Endothelial cell of umbilical vein (primary cell): ENCODE measurements at regions of chr1 and their contacts with region 1.

Region 1: DNA sequence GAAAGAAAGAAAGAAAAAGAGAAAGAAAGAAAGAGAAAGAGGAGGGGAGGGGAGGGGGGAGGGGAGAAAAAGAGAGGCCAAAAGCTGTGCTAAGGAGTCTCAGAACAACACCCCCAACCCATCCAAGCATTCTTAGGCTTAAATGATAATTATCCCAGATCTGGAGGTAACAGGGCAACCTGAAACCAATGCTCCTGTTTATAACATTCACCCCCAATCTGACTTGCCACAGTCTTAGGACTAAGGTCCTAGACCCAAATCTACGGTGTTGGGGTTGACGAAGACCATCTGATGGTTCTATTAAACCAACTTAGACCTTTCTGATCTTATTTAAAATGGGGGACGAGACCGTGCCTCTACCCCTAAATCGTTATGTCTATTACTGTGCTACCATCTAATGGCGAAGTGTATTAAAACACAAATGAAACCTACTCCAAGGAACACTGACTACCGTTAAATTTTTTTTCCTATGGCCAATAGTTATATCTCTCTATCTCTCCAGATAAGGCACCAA is 119.3 kb upstream of the CDC42BPA start:
- DNase-seq: peak; percentile 84
- H3K4me3 ChIP-seq: peak overlapping the region in 2 of 3 experiments; percentile 11 to 52
- H3K27ac ChIP-seq: no peak overlapping the region
- H3K4me1 ChIP-seq: peaks cover 12% of the 10 kb centered on the region
- H3K27me3 ChIP-seq: no peaks in the 10 kb centered on the region
- CTCF ChIP-seq: peak in 1 of 2 donors; percentile 32
- POLR2A ChIP-seq: no peak

Region 2: GRCh38 chr1:226626577-226626956 is 811.0 kb before region 1 on chr1:
- CTCF ChIA-PET with region 1: interaction called, 12 read pairs
- POLR2A ChIA-PET with region 1: no interaction called
- dilution Hi-C with region 1: no loop called
- intact Hi-C with region 1: loop called (anchors 5 kb)
- DNase-seq: peak; percentile 66
- H3K4me3 ChIP-seq: no peak overlapping the region
- H3K27ac ChIP-seq: no peak overlapping the region
- H3K4me1 ChIP-seq: no peaks in the 10 kb centered on the region
- H3K27me3 ChIP-seq: no peaks in the 10 kb centered on the region
- CTCF ChIP-seq: peak; percentile 94 to 97
- POLR2A ChIP-seq: no peak

Region 3: GRCh38 chr1:226634166-226634588 is 803.4 kb before region 1 on chr1:
- CTCF ChIA-PET with region 1: no interaction called
- POLR2A ChIA-PET with region 1: no interaction called
- dilution Hi-C with region 1: no loop called
- intact Hi-C with region 1: loop called (anchors 5 kb)
- DNase-seq: peak; percentile 60
- H3K4me3 ChIP-seq: no peak overlapping the region
- H3K27ac ChIP-seq: no peak overlapping the region
- H3K4me1 ChIP-seq: no peaks in the 10 kb centered on the region
- H3K27me3 ChIP-seq: no peaks in the 10 kb centered on the region
- CTCF ChIP-seq: peak; percentile 83 to 95
- POLR2A ChIP-seq: no peak

Region 4: DNA sequence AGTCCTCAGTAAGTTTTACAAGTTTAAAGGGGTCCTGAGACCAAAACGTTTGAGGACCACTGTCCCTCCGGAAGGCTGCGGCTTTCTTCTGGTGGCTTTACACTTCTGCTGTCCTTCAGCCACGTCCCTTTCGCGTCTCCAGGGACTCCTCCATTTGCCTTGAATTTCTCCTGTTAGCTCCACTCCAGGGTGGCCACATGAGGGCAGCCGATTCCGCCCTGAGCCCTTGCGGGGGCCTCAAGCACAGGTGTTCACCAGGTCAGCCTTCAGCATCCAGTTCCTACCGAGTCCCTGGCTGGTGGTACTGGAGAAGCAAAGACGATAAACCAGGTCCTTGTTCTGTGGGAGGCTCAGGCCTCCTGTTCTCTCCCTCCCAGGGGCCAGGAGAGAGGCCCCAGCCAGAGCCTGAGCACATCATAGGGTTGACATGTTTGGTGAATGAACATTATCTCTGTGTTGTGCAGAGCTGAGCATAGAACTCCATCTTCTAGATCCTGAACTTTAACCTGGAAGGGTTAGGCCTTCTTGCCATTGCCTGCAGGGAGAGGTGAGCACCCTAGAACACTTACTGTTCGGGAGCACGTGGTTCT is 524.9 kb before region 1 on chr1:
- CTCF ChIA-PET with region 1: interaction called, 14 read pairs
- POLR2A ChIA-PET with region 1: no interaction called
- dilution Hi-C with region 1: no loop called
- intact Hi-C with region 1: no loop called
- DNase-seq: peak; percentile 37
- H3K4me3 ChIP-seq: no peak overlapping the region
- H3K27ac ChIP-seq: no peak overlapping the region
- H3K4me1 ChIP-seq: no peaks in the 10 kb centered on the region
- H3K27me3 ChIP-seq: no peaks in the 10 kb centered on the region
- CTCF ChIP-seq: peak; percentile 23 to 55
- POLR2A ChIP-seq: no peak

Region 5: DNA sequence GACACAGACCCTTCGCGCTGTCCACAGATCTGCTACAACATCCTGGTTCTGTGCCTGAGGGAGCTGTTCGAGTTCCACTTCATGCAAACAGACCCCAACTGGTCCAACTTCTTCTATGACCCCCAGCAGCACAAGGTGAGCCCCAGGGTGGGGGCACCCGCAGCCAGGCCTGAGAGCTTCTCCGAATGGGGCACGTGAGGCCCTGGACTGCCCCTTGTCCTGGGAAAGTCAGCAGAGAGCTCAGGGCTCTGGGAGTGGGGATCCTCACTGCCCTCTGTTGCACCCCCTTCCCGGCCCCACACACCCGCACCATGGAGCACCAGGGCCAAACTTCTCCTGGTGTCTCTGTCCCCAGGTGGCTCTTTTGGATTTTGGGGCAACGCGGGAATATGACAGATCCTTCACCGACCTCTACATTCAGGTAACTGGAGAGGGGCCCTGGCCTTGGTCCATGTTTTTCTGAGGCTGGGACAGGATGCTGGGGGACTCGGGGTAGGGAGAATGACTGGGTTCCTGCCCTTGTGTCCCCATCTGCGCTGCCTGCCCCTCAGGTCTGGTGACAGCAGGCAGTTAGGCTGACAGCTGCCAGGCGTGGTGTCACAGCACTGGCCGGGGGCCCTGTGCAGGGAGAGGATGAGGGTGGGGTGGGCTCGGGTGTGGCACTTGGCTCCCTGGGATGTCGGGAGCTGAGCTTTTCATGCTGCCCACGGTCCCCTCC is 452.9 kb before region 1 on chr1:
- CTCF ChIA-PET with region 1: no interaction called
- POLR2A ChIA-PET with region 1: no interaction called
- dilution Hi-C with region 1: no loop called
- intact Hi-C with region 1: loop called (anchors 5 kb)
- DNase-seq: no peak
- H3K4me3 ChIP-seq: no peak overlapping the region
- H3K27ac ChIP-seq: no peak overlapping the region
- H3K4me1 ChIP-seq: peaks cover 6% of the 10 kb centered on the region
- H3K27me3 ChIP-seq: no peaks in the 10 kb centered on the region
- CTCF ChIP-seq: no peak
- POLR2A ChIP-seq: no peak

Region 6: GRCh38 chr1:227131193-227131592 is 306.4 kb before region 1 on chr1:
- CTCF ChIA-PET with region 1: interaction called, 5 read pairs
- POLR2A ChIA-PET with region 1: no interaction called
- dilution Hi-C with region 1: no loop called
- intact Hi-C with region 1: loop called (anchors 1 kb)
- DNase-seq: peak; percentile 51
- H3K4me3 ChIP-seq: no peak overlapping the region
- H3K27ac ChIP-seq: no peak overlapping the region
- H3K4me1 ChIP-seq: peaks cover 23% of the 10 kb centered on the region
- H3K27me3 ChIP-seq: no peaks in the 10 kb centered on the region
- CTCF ChIP-seq: peak; percentile 37 to 43
- POLR2A ChIP-seq: no peak

Region 7: GRCh38 chr1:227234998-227235405 is 202.6 kb before region 1 on chr1:
- CTCF ChIA-PET with region 1: interaction called, 6 read pairs
- POLR2A ChIA-PET with region 1: no interaction called
- dilution Hi-C with region 1: no loop called
- intact Hi-C with region 1: loop called (anchors 1 kb)
- DNase-seq: peak; percentile 79
- H3K4me3 ChIP-seq: no peak overlapping the region
- H3K27ac ChIP-seq: no peak overlapping the region
- H3K4me1 ChIP-seq: peaks cover 11% of the 10 kb centered on the region
- H3K27me3 ChIP-seq: no peaks in the 10 kb centered on the region
- CTCF ChIP-seq: peak; percentile 55 to 60
- POLR2A ChIP-seq: no peak

Region 8: DNA sequence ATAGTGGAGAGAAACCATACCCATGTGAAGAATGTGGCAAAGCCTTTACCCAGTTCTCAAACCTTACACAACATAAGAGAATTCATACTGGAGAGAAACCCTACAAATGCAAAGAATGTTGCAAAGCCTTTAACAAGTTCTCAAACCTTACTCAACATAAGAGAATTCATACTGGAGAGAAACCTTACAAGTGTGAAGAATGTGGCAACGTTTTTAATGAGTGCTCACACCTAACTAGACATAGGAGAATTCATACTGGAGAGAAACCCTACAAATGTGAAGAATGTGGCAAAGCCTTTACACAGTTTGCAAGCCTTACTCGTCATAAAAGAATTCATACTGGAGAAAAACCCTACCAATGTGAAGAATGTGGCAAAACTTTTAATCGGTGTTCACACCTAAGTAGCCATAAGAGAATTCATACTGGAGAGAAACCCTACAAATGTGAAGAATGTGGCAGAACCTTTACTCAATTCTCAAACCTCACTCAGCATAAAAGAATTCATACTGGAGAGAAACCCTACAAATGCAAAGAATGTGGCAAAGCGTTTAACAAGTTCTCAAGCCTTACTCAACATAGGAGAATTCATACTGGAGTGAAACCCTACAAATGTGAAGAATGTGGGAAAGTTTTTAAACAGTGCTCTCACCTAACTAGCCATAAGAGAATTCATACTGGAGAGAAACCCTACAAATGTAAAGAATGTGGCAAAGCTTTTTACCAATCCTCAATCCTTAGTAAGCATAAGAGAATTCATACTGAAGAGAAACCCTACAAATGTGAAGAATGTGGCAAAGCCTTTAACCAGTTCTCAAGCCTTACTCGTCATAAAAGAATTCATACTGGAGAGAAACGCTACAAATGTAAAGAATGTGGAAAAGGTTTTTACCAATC is 217.6 kb after region 1 on chr1:
- CTCF ChIA-PET with region 1: no interaction called
- POLR2A ChIA-PET with region 1: no interaction called
- dilution Hi-C with region 1: no loop called
- intact Hi-C with region 1: no loop called
- DNase-seq: peak; percentile 2
- H3K4me3 ChIP-seq: no peak overlapping the region
- H3K27ac ChIP-seq: no peak overlapping the region
- H3K4me1 ChIP-seq: no peaks in the 10 kb centered on the region
- H3K27me3 ChIP-seq: no peaks in the 10 kb centered on the region
- CTCF ChIP-seq: no peak
- POLR2A ChIP-seq: no peak